ENCODE measurements at regions of chr2 and their contacts with region 1.

Region 1: DNA sequence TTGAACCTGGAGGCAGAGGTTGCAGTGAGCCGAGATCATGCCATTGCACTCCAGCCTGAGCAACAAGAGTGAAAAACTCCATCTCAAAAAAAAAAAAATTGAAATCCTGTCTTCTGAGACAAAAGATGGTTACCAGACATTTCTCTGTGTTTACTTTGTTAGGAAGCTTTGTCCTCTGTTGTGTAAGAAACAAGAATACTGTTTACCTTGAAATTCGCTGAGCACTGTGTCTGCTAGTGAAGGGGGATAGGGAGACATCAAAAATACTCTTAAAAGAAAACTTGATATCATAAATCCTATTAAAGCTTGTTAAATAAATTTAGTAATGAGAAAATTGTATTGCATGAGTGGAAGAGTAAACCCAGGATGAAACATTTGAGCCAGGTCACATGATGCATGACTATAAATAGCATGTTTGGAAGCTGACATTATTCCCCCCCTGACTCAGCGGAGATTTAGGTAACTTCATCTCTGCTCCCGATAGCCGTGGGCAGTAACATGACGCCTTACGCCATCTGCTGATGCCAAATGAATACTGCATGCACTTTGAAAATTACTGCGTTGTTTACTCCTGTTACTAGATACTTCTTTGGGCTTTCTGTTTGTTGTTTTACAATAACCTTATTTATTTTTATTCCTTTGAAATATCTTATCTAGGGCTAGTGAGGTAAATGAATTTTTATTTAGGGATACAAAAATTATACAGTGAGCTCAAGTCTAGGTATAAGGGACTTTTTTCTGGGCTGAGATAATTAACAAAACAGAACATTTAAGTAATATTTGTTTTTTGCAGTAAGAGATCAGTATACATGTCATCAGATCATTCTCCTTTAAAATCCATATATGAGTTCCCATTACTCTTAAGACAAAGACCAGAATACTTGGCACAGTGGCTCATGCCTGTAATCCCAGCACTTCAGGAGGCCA is 134.9 kb downstream of the MAP3K20 start:
- DNase-seq: peak; percentile 58
- CTCF ChIP-seq: peak; percentile 86

Region 2: DNA sequence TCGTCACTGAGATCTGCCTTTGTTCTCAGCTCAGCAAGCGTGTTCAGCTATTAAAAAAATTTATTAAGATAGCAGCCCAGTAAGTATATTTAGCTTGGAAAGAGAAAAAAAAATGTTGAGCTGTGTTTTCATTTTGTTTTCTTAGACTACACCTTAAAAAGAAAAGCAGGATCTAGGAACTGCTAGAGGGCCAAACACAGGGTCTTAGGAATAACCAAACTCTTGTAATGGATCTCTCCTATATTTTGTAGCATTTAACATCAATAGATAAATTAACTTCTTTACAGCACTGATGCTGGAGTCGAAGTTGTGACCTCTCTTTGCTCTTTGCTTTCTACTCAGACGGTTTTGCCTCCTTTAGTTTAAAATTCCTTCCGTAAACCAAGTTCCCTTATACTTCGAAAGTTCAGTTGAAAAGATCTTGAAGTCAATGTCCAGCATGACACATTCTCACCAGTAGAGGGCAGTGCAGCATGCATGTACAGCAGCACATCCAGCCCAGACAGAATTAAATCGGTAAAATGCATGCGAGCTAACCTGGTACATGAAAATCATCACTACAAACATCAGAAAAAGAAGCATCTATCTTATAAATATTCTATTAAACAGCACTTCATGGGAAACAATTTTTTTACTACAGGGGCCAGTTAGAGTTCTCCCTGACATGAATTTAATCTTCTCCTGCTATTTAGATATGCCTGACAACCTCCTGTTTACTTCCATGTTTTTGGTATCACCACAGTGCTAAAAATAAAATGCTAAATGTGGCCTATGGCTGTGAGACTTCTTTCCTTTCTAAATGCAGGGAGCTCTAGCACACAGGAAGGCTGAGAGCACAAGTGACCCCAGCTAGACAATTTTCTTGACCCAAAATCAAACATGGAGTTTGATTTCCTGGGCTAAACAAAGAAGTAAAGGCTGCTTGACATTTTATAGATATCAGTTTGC is 183.1 kb before region 1 on chr2:
- in situ Hi-C with region 1: loop called (anchors 5 kb)
- DNase-seq: peak; percentile 80
- CTCF ChIP-seq: peak; percentile 91

Region 3: DNA sequence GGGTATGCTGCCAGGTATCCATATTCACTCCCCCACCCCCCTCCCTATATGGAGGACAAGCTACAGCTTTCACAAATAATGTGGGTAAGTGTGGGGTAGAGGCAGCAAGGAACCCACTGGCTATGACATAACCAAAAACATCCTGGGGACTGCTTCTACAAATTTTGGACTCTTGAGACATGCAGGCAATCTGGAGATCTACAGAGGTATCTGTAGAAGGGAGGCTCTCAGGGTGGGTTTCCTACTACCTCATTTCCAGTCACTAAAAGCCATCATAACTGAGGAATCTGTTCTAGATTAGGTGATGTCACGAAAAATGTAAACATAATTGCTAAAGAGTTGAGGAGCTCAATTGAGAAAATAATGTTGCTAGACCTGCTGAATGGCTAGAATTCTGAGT is 1433.9 kb after region 1 on chr2:
- in situ Hi-C with region 1: no loop called
- DNase-seq: no peak
- CTCF ChIP-seq: no peak